ENCODE measurements at regions of chr20 and their contacts with region 1.

Region 1: DNA sequence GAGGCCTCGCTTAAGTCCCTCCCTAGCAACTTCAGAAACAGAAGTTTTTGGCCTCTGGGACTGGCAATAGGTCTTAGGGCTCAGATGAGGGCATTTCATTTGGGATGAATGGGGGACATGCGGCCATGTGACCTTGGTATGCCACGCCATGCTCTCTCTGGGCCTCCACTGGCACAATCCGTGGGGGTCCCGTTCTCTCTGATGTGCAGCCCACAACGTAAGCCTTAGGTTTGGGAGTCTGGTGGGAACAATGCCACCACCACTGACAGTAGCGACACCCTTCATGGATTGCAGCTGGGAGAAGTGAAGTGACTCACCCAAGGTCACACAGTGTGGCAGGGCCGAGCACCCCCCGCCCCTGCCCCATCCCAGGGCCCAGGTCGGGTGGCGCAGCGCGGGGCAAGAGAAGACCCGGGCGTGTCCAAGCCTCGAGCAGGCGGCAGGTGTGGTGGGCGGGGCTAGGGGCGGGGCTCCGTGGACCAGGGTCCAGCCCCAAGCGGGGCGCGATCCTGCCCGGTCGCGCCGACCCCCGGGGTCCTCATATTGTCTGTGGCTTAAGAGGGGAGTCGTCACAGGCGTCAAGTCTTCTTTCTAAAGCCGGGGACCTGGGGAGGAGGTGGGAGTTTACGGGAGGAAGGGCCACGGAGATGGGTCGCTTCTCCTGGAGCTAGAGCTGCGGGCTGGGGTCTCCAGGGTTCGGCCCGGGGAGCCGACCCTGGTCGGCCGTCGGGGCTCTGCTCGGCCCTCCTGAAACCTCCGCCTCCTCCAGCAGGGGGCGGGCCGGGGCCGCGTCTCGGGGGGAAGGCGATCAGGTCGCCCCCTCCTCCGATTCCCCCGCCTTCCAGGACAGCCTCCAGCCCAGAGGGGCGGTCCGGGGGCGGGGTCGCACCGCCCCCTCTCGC is 698 bp upstream of the CEBPB start:
- DNase-seq: peak; percentile 91
- ATAC-seq: peak; percentile 71 to 81

Region 2: GRCh38 chr20:50308513-50309279 is 118.8 kb after region 1 on chr20:
- intact Hi-C with region 1: loop called in 1 of 2 experiments (anchors 10 kb)
- DNase-seq: peak; percentile 93
- ATAC-seq: peak; percentile 69 to 78

Region 3: GRCh38 chr20:50395258-50395729 is 205.4 kb after region 1 on chr20:
- intact Hi-C with region 1: loop called in 1 of 2 experiments (anchors 5 kb)
- DNase-seq: peak; percentile 87
- ATAC-seq: peak; percentile 69 to 85

Region 4: GRCh38 chr20:50575847-50576720 is 386.2 kb after region 1 on chr20:
- intact Hi-C with region 1: loop called (anchors 5 kb)
- DNase-seq: peak; percentile 70
- ATAC-seq: peak; percentile 60 to 61

Region 5: DNA sequence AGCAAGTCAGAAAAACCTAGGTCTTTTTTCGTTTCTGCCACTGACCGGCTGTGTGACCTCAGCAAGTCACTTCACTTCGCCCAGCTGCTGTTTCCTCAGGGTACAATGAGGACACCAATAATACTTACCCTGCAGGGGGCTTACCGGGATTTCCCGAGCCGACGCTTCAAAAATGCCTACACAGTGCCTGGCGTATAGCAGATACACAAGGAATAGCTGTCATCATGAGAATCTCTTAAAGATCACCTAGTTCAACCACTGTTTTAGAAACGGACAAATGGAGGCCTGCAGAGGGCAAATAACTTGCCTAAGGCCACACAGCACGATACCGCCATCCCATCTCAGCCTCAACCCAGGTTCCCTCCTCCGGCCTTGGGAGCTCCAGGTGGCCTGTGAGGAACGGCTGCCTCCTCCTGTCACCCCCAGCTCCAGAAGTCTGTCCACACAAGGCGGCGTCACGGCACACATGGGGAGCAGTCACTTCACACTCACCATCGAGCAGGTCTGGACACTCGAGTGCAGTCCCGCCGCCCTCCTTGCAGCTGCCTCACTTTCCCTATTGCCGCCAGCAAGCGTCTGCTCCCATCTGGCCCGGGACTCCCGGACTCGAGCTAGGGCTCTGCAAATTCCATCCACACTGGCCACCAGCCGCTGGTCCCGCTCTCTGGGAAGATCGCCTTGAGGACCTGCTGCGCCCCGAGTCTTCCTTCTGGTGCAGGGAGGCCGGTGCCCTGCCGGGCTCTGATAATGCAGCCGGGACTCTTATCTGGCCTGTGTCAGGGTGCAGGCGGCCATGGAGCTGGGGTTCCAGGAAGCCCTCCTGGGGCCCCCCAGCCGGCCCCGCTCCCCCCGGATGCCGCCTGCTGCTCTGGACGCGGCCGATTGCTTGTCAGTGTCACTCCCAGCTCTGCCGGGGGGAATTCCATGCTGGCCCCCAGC is 501.0 kb after region 1 on chr20 and contains the start of gene RIPOR3:
- intact Hi-C with region 1: no loop called
- DNase-seq: no peak
- ATAC-seq: peak; percentile 32 to 45
- total RNA-seq, gene RIPOR3: 3.3 to 6.7 TPM